HEK293T (cell line): ENCODE measurements at regions of chr1 and their contacts with region 1.

Region 1: DNA sequence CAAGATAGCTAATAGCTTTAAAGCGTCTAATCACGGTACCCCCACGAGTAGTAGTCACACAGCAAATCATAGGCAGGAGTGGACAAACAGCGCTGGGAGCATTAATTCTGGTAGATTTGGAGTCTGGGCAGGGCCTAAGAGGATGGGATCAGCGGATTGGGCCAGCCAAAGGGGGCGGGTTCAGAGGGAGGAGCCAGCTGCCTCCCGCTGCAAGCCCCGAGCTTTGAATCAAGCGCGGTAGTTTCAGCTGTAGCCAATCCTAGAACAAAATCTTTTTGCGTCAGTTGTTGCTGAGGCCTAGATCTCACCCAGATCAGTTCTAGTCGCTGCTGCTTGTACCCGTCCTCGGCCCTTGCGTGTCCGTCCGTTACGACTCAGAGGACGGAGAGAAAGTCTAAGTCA is 576 bp upstream of the NASP start:
- DNase-seq: peak; percentile 98

Region 2: DNA sequence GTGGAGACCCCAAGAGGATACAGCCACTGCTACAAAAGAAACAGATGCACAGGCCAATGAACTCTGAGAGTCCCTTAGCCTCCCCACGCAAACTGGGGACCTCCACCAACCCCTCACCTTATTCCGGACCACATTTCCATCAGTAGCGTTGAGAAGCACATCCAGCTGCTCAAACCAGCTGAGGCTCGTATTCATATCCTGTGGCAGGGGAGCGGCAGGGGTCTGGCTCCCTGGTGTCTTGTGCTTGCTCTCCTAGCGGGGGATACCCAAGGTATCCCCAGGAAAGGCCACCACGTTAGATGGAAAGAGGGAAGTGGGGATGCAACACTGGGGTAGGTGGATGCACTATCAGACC is 83.9 kb before region 1 on chr1:
- CTCF ChIA-PET with region 1: no interaction called
- POLR2A ChIA-PET with region 1: interaction called, 18 read pairs
- DNase-seq: no peak

Region 3: DNA sequence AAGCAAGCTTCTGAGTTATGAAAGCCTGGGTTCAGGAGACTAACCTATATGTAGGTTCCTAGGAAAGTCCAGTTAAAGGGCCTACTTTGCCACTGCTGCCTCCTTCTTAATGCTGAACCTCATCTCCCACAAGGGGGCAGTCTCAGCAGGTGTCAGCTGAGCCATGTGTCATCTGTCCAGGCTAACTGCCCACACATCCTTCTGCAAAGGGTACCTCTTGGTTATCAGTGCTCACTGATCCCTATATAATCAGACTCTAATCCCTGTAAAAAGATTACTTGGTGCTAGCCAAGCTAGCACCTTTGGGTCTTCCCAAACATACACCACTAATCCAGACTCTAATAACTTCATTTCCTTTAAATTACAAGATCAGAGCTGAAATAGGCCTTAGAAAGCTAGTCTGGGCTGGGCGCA is 70.6 kb before region 1 on chr1:
- CTCF ChIA-PET with region 1: no interaction called
- POLR2A ChIA-PET with region 1: interaction called, 13 read pairs
- DNase-seq: peak; percentile 60

Region 4: GRCh38 chr1:45543581-45544417 is 39.5 kb before region 1 on chr1:
- CTCF ChIA-PET with region 1: no interaction called
- POLR2A ChIA-PET with region 1: interaction called, 11 read pairs
- DNase-seq: no peak

Region 5: GRCh38 chr1:45686317-45687013 is 103.2 kb after region 1 on chr1 and contains the start of gene GPBP1L1:
- CTCF ChIA-PET with region 1: no interaction called
- POLR2A ChIA-PET with region 1: interaction called, 11 read pairs
- DNase-seq: peak; percentile 98